Activated naive CD8-positive, alpha-beta T cell treated with anti-CD3 and anti-CD28 coated beads, Interleukin-2, amount 10 ng/mL, durations not matched to agents 7 days and 5 days (primary cell): ENCODE measurements at regions of chr15 and their contacts with region 1.

Region 1: DNA sequence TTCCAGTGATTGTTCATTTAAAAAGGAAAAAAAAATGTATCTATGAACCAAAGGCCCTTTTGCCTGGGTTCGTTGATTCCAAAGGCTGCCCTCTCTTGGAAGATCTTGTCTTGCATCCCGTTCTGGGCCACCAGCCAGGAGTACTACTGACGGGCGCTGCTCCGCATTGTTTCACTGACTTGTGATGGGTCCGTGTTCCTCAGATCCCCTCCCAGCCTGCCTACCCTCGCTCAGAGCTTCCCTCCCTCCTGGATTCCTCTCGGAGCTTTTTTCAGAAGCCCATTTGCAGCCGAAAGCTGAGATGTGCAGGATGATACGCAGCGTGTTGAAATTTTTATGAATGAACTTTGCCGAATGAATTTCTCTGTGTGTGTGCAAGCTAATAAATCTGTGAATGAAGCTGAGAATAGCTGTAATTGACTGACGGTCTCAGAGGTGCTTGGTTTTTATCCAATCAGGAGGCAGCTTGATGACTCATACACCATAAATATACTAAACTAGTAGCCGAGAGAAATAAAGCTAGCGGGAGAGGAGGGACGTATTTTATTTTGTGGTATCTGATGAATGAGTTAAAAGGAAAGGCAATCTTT is at the start of gene SHC4:
- DNase-seq: no peak
- ATAC-seq: peak; percentile 31
- H3K4me3 Mint-ChIP-seq: peak within 1 kb of the TSS; percentile 78
- H3K27ac Mint-ChIP-seq: peak within 1 kb of the TSS; percentile 74
- H3K4me1 Mint-ChIP-seq: peaks cover 33% of the 10 kb centered on the region
- H3K27me3 Mint-ChIP-seq: peaks cover 30% of the 10 kb centered on the region
- total RNA-seq, gene SHC4: 0.23 to 0.47 TPM

Region 2: GRCh38 chr15:48975472-48976419 is 12.1 kb after region 1 on chr15:
- POLR2A ChIA-PET with region 1: interaction called, 13 read pairs
- DNase-seq: peak; percentile 93
- ATAC-seq: peak; percentile 98
- H3K4me3 Mint-ChIP-seq: peak overlapping the region; percentile 63
- H3K27ac Mint-ChIP-seq: peak overlapping the region; percentile 25
- H3K4me1 Mint-ChIP-seq: peaks cover 7% of the 10 kb centered on the region
- H3K27me3 Mint-ChIP-seq: peaks cover 15% of the 10 kb centered on the region